Left cardiac atrium (tissue), 4 donors: ENCODE measurements at regions of chr1 and their contacts with region 1.

Region 1: DNA sequence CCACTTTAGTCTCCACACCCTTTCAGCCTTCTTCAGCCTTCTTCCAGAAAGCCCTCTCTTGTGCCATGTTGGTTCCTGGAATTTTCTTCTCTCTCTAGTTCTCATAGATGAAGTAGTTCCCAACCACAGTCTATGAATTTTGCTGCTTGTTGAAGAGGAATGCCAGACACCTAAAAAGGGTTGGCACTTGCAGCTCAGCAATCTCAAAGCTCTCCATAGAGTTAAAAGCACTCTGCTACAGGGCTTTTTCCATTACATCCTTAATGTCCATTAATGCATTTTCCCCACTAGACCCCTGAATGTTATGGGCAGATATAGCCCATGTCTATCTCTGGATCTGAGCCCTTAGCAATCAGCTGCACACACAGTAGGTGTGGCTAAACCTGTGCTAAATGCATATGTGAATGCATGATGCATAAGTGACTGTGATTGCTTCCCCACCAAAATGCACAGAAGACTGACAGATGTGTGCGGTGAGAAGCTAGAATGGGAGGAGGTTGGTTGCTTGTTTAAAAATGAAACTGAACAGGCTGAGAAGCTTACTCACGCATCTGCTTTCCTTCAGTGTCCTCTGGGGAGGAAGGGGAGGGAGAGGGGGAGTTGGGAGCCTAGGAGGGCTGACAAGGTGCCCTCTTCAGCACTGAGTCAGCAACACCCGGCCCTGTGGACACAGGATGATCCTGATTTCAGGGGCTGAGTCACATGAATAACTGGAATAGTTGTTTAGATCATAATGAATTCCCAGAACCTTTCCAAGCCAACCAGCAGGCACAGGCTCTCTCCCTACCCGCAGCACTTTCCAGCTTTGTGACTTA is 146.1 kb upstream of the FGGY start:
- DNase-seq: peak; percentile 86
- ATAC-seq: peak; percentile 92 to 98

Region 2: GRCh38 chr1:59096501-59096900 is 54.3 kb before region 1 on chr1:
- intact Hi-C with region 1: no loop called
- DNase-seq: peak; percentile 58
- ATAC-seq: peak; percentile 95 to 98

Region 3: GRCh38 chr1:59290193-59290947 is 139.6 kb after region 1 on chr1:
- intact Hi-C with region 1: loop called in 1 of 2 experiments (anchors 5 kb)
- DNase-seq: peak; percentile 37
- ATAC-seq: peak; percentile 31 to 74

Region 4: GRCh38 chr1:59393211-59394180 is 242.7 kb after region 1 on chr1:
- intact Hi-C with region 1: no loop called
- DNase-seq: peak; percentile 80
- ATAC-seq: peak; percentile 93 to 98